ENCODE measurements at regions of chr2 and their contacts with region 1.

Region 1: DNA sequence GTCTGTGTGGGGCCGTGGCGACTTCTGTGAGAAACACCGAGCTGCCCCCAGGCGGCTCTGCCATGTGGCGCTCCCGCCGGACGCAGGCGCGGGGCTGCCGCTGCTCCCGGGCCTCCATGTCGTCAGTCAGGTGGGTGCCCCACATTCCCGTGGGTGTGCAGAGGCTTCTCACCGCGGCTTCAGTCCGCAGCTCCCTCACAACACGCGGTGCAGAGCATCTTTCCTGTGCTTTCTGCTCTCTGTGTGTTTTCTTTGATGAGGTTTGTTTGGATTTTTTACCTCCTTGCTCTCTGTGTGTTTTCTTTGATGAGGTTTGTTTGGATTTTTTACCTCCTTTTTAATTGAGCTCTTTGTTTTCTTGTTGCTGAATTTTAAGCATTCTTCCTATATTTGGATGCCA is 13.0 kb downstream of the AQP12A start:
- DNase-seq: no peak
- H3K4me3 ChIP-seq: no peak overlapping the region
- H3K27ac ChIP-seq: no peak overlapping the region
- H3K4me1 ChIP-seq: no peaks in the 10 kb centered on the region
- H3K27me3 ChIP-seq: peaks cover 0 to 54% of the 10 kb centered on the region in 2 donors
- CTCF ChIP-seq: no peak

Region 2: DNA sequence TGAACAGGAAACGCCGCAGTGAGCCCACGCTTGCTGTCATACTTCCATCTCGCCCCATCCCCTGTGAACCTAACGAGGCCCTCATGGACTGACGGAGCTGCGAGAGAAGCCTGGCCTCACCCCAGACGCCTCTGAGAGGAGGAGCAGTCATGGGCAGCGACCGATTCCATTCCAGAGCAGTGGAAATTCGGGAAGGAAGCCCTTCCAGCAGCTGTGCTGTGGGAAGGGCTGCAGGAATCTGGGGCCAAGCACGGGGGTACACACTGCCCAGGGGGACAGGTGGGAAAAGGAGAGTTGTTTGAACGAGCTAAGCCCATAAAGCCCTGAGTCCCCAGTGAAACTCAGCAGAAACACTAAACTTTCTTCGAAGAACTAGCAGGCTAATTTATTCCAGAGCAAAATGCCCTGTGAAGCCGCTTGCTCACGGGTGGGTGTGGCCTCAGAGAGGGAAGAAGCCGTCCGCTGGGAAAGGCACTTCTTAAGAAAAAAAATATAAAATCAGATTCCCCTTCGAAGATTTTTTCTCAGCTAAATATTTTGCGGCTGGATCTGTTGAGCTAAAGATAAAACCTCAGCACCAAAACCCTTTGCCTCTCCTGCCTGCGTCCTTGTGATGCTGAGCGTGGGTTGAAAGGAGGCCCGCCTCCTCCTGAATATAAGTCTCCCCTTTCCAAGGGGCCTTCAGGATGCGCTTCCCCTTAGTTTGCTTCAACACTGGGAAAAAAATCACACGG is 185.1 kb before region 1 on chr2:
- intact Hi-C with region 1: loop called (anchors 10 kb)
- DNase-seq: no peak
- H3K4me3 ChIP-seq: peak overlapping the region; percentile 8
- H3K27ac ChIP-seq: no peak overlapping the region
- H3K4me1 ChIP-seq: peaks cover 0 to 18% (median 10%) of the 10 kb centered on the region in 4 donors
- H3K27me3 ChIP-seq: peaks cover 0 to 11% of the 10 kb centered on the region in 2 donors
- CTCF ChIP-seq: no peak

Region 3: DNA sequence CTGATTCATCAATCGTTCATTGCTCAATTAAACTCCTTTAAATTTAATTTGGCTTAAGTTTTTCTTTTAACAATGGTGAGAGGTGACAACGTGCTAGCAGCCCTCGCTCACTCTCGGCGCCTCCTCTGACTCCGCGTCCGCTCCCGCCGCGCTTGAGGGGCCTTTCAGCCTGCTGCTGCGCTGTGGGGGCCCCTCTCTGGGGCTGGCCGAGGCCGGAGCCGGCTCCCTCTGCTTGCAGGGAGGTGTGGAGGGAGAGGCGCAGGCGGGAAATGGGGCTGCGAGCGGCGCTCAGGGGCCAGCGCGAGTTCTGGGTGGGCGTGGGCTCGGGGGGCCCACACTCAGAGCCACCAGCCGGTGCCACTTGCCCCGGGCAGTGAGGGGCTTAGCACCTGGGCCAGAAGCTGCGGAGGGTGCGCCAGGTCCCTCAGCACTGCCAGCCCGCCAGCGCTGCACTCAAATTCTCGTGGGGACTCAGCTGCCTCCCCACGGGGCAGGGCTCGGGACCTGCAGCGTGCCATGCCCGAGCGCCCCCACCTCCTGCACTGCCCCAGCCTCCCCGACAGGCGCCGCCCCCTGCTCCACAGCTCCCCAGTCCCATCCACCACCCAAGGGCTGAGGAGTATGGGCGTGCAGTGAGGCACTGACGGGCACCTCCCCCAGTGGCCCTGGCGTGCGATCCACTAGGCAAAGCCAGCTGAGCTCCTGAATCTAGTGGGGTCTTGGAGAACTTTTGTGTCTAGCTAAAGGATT is 166.4 kb before region 1 on chr2:
- intact Hi-C with region 1: no loop called
- DNase-seq: no peak
- H3K4me3 ChIP-seq: no peak overlapping the region
- H3K27ac ChIP-seq: no peak overlapping the region
- H3K4me1 ChIP-seq: no peaks in the 10 kb centered on the region
- H3K27me3 ChIP-seq: no peaks in the 10 kb centered on the region
- CTCF ChIP-seq: no peak

Region 4: GRCh38 chr2:240604291-240604938 is 100.2 kb before region 1 on chr2:
- intact Hi-C with region 1: no loop called
- DNase-seq: peak; percentile 74 to 83
- H3K4me3 ChIP-seq: no peak overlapping the region
- H3K27ac ChIP-seq: no peak overlapping the region
- H3K4me1 ChIP-seq: peaks cover 0 to 7% (median 3%) of the 10 kb centered on the region in 4 donors
- H3K27me3 ChIP-seq: no peaks in the 10 kb centered on the region
- CTCF ChIP-seq: peak; percentile 39 to 56

Region 5: DNA sequence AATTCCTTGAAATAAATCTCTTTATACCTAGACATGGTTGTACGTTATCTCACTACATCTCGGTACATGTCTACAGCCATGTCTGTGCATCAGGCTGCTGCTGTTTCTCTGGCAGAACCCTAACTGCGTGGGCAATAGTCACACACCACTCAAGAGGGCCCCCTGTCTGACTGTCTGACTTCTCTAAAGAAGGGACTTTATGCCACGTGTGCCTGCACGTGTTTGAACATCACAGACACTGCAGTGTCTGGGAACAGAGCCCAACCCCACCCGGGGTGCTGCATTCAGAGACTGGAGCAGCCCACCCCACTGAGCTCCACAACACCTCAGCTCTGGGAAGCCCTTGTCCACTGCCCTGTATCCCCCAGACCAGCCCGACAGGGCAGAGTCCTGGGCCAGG is 60.4 kb after region 1 on chr2:
- intact Hi-C with region 1: no loop called
- DNase-seq: no peak
- H3K4me3 ChIP-seq: no peak overlapping the region
- H3K27ac ChIP-seq: no peak overlapping the region
- H3K4me1 ChIP-seq: no peaks in the 10 kb centered on the region
- H3K27me3 ChIP-seq: peaks cover 0 to 13% of the 10 kb centered on the region in 2 donors
- CTCF ChIP-seq: no peak

Region 6: GRCh38 chr2:241009601-241010530 is 305.2 kb after region 1 on chr2:
- intact Hi-C with region 1: no loop called
- DNase-seq: peak in 1 of 2 donors; percentile 79
- H3K4me3 ChIP-seq: peak overlapping the region; percentile 17 to 31
- H3K27ac ChIP-seq: peak overlapping the region; percentile 25 to 31
- H3K4me1 ChIP-seq: peaks cover 0 to 21% (median 14%) of the 10 kb centered on the region in 4 donors
- H3K27me3 ChIP-seq: no peaks in the 10 kb centered on the region
- CTCF ChIP-seq: no peak